ENCODE measurements at regions of chr17 and their contacts with region 1.

Region 1: GRCh38 chr17:45090711-45091110 is 29.6 kb downstream of the NMT1 start:
- DNase-seq: no peak
- ATAC-seq: no peak
- H3K4me3 ChIP-seq: no peak overlapping the region
- H3K27ac ChIP-seq: no peak overlapping the region
- H3K4me1 ChIP-seq: peaks cover 21% of the 10 kb centered on the region
- H3K27me3 ChIP-seq: no peaks in the 10 kb centered on the region
- CTCF ChIP-seq: no peak

Region 2: GRCh38 chr17:44837243-44837642 is 253.5 kb before region 1 on chr17:
- CTCF ChIA-PET with region 1: no interaction called
- POLR2A ChIA-PET with region 1: interaction called, 13 read pairs
- intact Hi-C with region 1: no loop called
- DNase-seq: peak; percentile 42
- ATAC-seq: no peak
- H3K4me3 ChIP-seq: no peak overlapping the region
- H3K27ac ChIP-seq: no peak overlapping the region
- H3K4me1 ChIP-seq: no peaks in the 10 kb centered on the region; the same call in 1 of the 2 replicates
- H3K27me3 ChIP-seq: no peaks in the 10 kb centered on the region
- CTCF ChIP-seq: no peak

Region 3: GRCh38 chr17:45143767-45144198 is 53.1 kb after region 1 on chr17:
- CTCF ChIA-PET with region 1: no interaction called
- POLR2A ChIA-PET with region 1: no interaction called
- intact Hi-C with region 1: no loop called
- DNase-seq: no peak
- ATAC-seq: no peak
- H3K4me3 ChIP-seq: peak overlapping the region; percentile 43; the same call in 1 of the 2 replicates
- H3K27ac ChIP-seq: no peak overlapping the region
- H3K4me1 ChIP-seq: peaks cover 16% of the 10 kb centered on the region
- H3K27me3 ChIP-seq: no peaks in the 10 kb centered on the region
- CTCF ChIP-seq: no peak

Region 4: GRCh38 chr17:45161019-45161825 is 70.5 kb after region 1 on chr17:
- CTCF ChIA-PET with region 1: no interaction called
- POLR2A ChIA-PET with region 1: no interaction called
- intact Hi-C with region 1: no loop called
- DNase-seq: peak; percentile 100
- ATAC-seq: peak; percentile 87
- H3K4me3 ChIP-seq: peak overlapping the region; percentile 83
- H3K27ac ChIP-seq: peak overlapping the region; percentile 91
- H3K4me1 ChIP-seq: peaks cover 39% of the 10 kb centered on the region
- H3K27me3 ChIP-seq: no peaks in the 10 kb centered on the region
- CTCF ChIP-seq: no peak; the same call in 1 of the 2 replicates

Region 5: DNA sequence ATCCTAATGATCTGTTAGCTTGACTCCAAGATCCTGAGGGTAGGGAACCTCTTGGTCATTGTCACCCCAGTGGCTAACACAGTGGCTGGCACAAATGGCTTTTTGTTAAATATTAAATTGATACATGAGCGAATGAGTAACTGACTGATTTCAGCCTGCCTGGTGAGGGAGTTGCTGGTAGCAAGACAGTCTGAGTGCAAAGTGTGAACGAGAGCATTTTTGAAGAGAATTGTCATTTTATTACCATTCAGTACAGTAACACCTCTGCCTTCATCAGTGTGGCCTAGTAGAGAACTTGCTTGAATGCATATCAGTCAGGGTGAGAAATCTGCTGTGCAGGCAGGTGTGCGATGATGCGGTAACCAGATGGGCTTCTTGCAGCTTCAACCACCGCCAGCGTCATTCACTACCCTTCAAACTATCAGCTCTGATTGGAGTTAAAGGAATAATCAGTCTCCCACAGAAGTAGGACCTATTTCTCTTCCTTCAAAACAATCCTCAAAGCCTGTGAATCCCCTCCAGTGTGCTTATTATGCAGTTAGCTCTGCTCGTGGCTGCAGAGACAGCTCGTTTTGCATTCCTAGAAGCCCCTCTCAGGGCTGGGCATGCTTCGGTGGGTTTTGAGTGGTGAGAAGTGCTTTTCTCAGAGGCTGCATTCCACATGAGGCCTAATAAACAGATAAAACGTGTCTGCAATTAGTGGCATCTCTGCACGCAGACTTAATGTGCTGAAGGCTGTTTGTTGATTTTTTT is 100.0 kb after region 1 on chr17:
- CTCF ChIA-PET with region 1: no interaction called
- POLR2A ChIA-PET with region 1: no interaction called
- intact Hi-C with region 1: no loop called
- DNase-seq: no peak
- ATAC-seq: no peak
- H3K4me3 ChIP-seq: no peak overlapping the region
- H3K27ac ChIP-seq: no peak overlapping the region
- H3K4me1 ChIP-seq: no peaks in the 10 kb centered on the region
- H3K27me3 ChIP-seq: no peaks in the 10 kb centered on the region
- CTCF ChIP-seq: no peak

Measured in PC-3 (cell line).